HepG2 (cell line): ENCODE measurements at regions of chr19 and their contacts with region 1.

Region 1: DNA sequence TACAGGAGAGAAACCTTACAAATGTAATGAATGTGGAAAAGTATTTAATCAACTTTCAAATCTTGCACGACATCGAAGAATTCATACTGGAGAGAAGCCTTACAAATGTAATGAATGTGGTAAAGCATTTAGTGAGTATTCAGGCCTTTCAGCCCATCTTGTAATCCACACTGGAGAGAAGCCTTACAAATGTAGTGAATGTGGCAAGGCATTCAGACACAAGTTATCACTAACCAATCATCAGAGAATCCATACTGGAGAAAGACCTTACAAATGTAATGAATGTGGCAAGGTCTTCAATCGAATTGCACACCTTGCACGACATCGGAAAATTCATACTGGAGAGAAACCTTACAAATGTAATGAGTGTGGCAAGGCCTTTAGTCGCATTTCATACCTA is 13.6 kb upstream of the ZNF610 start:
- DNase-seq: no peak
- ATAC-seq: no peak
- H3K4me3 ChIP-seq: no peak overlapping the region
- H3K27ac ChIP-seq: no peak overlapping the region
- H3K4me1 ChIP-seq: no peaks in the 10 kb centered on the region
- H3K27me3 ChIP-seq: no peaks in the 10 kb centered on the region
- CTCF ChIP-seq: no peak
- EP300 ChIP-seq: no peak
- POLR2A ChIP-seq: no peak
- RAD21 ChIP-seq: no peak

Region 2: DNA sequence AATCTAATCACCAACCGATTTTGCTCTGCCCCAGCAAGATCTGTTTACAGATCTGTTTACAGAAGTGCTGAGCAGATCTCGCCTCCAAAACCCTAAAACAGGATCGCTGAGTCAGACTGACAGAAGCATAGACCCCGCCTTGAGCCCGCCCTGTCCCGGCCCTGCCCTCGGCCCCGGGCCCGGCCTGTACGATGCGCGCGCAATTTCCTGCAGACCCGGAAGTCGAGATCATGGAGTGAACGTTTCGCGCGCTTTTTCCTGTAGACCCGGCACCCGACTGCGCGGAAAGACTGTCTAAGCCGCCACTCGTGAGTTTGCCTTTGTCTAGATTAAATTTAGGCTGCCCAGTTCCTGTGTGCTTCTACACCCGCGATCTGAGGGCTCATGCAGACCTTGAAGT is 106.5 kb after region 1 on chr19 and contains the start of gene ZNF534:
- CTCF ChIA-PET with region 1: no interaction called
- POLR2A ChIA-PET with region 1: no interaction called
- in situ Hi-C with region 1: no loop called
- intact Hi-C with region 1: no loop called
- DNase-seq: no peak
- ATAC-seq: no peak
- H3K4me3 ChIP-seq: no peak within 1 kb of the TSS
- H3K27ac ChIP-seq: no peak within 1 kb of the TSS
- H3K4me1 ChIP-seq: no peaks in the 10 kb centered on the region
- H3K27me3 ChIP-seq: no peaks in the 10 kb centered on the region
- CTCF ChIP-seq: no peak
- EP300 ChIP-seq: no peak
- POLR2A ChIP-seq: no peak
- RAD21 ChIP-seq: no peak
- total RNA-seq, gene ZNF534: 0.04 TPM in 1 of 2 replicates, not detected in the other

Region 3: DNA sequence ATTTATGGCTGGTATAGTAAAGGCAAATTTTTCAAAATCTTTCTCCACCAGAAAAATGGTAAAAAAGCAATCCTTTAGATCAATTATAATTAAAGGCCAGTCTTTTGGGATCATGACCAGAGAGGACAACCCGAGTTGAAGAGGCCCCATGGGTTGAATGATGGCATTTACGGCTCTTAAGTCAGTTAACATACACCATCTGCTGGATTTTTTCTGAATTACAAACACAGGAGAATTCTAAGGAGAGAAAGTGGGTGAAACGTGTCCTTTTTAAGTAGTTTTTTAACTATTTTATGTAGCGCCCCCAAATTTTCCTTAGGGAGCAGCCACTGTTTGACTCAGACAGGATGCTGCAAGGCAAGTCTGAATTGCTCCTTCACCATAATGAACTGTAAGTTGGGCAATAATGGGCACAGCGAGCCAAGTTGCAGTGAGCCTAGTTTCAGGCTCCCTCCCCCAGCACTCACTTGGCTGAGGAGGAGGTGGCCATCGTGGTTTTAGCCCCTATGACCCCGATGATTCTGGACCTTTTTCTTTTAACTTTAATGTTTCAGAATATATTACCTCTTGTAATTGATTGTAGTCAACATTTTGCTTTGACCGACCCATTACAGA is 426.0 kb after region 1 on chr19:
- CTCF ChIA-PET with region 1: no interaction called
- POLR2A ChIA-PET with region 1: no interaction called
- in situ Hi-C with region 1: no loop called
- intact Hi-C with region 1: loop called (anchors 10 kb)
- DNase-seq: peak; percentile 35
- ATAC-seq: no peak
- H3K4me3 ChIP-seq: peak overlapping the region in 2 of 3 experiments; percentile 21 to 40; a peak in 3 of 6 replicates
- H3K27ac ChIP-seq: no peak overlapping the region
- H3K4me1 ChIP-seq: peaks cover 21% of the 10 kb centered on the region; the same call in 1 of the 2 replicates
- H3K27me3 ChIP-seq: no peaks in the 10 kb centered on the region
- CTCF ChIP-seq: peak; percentile 33
- EP300 ChIP-seq: no peak
- POLR2A ChIP-seq: no peak
- RAD21 ChIP-seq: no peak